ENCODE measurements at regions of chr9 and their contacts with region 1.

Region 1: GRCh38 chr9:30280229-30280900 is 2104.1 kb upstream of the ACO1 start:
- H3K4me3 Mint-ChIP-seq: no peak overlapping the region
- H3K27ac Mint-ChIP-seq: no peak overlapping the region
- H3K4me1 Mint-ChIP-seq: peaks cover 14% of the 10 kb centered on the region
- H3K27me3 Mint-ChIP-seq: no peaks in the 10 kb centered on the region

Region 2: GRCh38 chr9:30301271-30301963 is 21.1 kb after region 1 on chr9:
- intact Hi-C with region 1: loop called (anchors 1 kb)
- H3K4me3 Mint-ChIP-seq: peak overlapping the region; percentile 68
- H3K27ac Mint-ChIP-seq: peak overlapping the region; percentile 98
- H3K4me1 Mint-ChIP-seq: peaks cover 30% of the 10 kb centered on the region
- H3K27me3 Mint-ChIP-seq: no peaks in the 10 kb centered on the region

Region 3: DNA sequence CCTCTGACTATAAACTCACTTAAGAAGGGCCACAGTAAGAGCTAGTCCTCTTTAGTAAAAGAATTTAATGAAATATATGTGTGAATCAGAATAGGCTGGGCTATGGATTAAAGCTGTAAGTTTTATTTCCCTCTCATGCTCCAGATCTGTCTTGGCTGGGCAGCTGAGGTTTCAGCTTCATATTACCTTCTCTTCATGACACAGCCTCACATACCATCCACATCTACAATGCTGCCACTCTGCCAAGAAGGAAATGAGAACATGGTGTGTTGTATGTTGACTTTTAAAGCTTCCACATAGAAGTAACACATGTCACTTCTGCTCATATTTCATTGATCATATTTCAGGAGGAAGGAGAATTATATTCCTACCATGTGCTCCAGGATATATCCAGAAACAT is 1328.1 kb after region 1 on chr9:
- intact Hi-C with region 1: no loop called
- H3K4me3 Mint-ChIP-seq: no peak overlapping the region
- H3K27ac Mint-ChIP-seq: no peak overlapping the region
- H3K4me1 Mint-ChIP-seq: no peaks in the 10 kb centered on the region
- H3K27me3 Mint-ChIP-seq: no peaks in the 10 kb centered on the region

Measured in dendritic cell treated with granulocyte-macrophage colony-stimulating factor and Interleukin-4, amounts not matched to agents 40 ng/mL and 50 ng/mL, for 4 days (primary cell).